ENCODE measurements at regions of chr22 and their contacts with region 1.

Region 1: DNA sequence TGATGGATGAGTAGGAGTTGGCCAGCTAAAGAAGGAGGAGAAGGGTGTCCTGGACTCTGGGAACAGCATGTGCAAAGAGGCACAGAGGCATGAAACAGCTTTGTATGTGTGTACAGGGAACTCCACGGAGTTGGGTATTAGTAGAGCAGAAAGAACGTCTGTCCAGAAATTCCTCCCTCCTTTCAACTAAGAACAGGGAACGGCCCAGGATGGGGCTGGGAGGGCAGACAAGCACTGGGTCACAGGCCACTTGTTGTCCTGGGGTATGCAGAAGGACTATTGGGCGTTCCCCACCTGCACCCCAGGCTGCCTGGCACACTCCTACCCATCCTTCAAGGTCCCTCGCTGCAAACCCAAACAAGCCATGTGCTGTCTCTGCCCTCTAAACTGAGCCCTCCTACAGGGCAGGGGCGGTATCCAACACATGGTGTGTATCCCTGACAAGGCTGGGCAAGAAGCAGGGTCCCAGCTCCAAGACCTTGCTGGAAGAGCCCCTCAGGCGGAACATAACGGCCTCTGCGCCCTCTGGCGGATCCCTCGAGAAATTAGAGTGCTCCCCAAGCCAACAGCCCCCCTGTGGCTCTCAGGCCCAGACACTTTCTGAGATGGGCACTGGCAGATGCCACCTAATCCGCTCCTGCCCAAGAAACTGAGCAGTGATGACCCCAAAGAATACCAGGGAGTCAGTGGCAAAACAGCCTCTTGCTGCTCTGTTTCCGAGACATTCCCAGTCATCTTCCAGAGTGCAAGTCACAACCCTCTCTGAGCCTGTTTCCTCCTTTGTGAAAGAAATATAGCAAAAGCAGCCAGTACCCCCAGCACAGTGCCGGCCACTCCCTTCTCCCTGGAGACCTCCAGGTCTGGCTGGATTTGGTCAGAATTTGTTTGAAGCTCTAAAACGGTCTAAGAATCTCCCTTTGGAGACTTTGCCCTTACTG is 1.6 kb upstream of the ELFN2 start:
- DNase-seq: peak; percentile 59 to 78 (median 70)
- H3K4me3 ChIP-seq: no peak overlapping the region
- H3K27ac ChIP-seq: no peak overlapping the region
- H3K4me1 ChIP-seq: peaks cover 0 to 24% (median 14%) of the 10 kb centered on the region in 4 experiments
- H3K27me3 ChIP-seq: peaks cover 3 to 50% (median 20%) of the 10 kb centered on the region in 5 experiments

Region 2: DNA sequence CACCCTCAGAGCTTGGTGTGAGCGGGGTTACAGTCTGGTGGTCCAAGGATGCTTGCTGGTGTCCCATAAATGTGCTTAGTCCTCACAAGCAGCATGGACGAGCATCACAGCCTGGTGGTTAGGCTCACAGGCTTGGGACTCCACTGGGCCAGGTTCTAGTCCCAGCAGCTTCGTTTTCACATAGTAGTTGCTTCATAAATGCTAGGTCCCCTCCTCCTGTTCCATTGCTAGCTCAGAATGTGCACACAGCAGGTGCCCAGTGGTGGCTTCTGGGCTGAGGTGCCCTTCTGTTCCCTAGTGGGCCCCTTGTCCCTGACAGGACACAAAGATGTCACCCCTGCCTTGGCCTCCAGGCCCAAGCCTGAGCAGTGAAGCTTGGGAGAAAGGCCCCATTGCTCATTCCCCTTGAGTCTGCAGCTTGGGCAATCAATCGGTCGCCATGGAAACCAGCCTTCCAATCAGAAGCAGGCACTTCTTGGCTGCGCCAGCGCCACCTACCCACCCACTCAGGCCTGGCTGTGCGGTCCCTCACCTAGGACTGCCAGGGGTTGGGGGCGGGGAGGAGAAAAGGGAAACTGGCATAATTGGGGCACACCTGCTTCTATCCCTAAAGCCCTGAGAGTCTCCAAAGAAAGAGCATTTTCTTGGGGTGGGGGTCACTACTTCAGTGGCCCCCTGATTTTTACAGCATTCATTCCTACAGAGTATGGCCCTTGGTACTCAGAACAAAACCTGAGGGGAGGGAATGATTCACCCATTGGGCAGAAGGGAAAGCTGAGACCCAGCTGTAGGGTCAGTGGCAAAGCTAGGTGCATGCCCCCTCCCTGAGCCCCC is 98.5 kb before region 1 on chr22:
- CTCF ChIA-PET with region 1: interaction called, 10 read pairs
- POLR2A ChIA-PET with region 1: no interaction called
- DNase-seq: peak; percentile 69 to 80 (median 77)
- H3K4me3 ChIP-seq: no peak overlapping the region
- H3K27ac ChIP-seq: no peak overlapping the region
- H3K4me1 ChIP-seq: peaks cover 0 to 9% (median 5%) of the 10 kb centered on the region in 4 experiments
- H3K27me3 ChIP-seq: peaks cover 6 to 75% (median 38%) of the 10 kb centered on the region in 5 experiments

Region 3: GRCh38 chr22:37412495-37413250 is 16.2 kb before region 1 on chr22:
- CTCF ChIA-PET with region 1: interaction called, 13 read pairs
- POLR2A ChIA-PET with region 1: interaction called, 3 read pairs
- DNase-seq: peak in 2 of 3 donors; percentile 27 to 33
- H3K4me3 ChIP-seq: no peak overlapping the region
- H3K27ac ChIP-seq: no peak overlapping the region
- H3K4me1 ChIP-seq: peaks cover 0 to 30% (median 21%) of the 10 kb centered on the region in 4 experiments
- H3K27me3 ChIP-seq: peaks cover 0 to 7% (median 3%) of the 10 kb centered on the region in 5 experiments

Region 4: GRCh38 chr22:37442537-37442936 is 13.6 kb after region 1 on chr22:
- CTCF ChIA-PET with region 1: interaction called, 10 read pairs
- POLR2A ChIA-PET with region 1: no interaction called
- DNase-seq: peak in 1 of 3 donors; percentile 39
- H3K4me3 ChIP-seq: no peak overlapping the region
- H3K27ac ChIP-seq: no peak overlapping the region
- H3K4me1 ChIP-seq: no peaks in the 10 kb centered on the region
- H3K27me3 ChIP-seq: peaks cover 0 to 6% (median 0%) of the 10 kb centered on the region in 5 experiments

Region 5: DNA sequence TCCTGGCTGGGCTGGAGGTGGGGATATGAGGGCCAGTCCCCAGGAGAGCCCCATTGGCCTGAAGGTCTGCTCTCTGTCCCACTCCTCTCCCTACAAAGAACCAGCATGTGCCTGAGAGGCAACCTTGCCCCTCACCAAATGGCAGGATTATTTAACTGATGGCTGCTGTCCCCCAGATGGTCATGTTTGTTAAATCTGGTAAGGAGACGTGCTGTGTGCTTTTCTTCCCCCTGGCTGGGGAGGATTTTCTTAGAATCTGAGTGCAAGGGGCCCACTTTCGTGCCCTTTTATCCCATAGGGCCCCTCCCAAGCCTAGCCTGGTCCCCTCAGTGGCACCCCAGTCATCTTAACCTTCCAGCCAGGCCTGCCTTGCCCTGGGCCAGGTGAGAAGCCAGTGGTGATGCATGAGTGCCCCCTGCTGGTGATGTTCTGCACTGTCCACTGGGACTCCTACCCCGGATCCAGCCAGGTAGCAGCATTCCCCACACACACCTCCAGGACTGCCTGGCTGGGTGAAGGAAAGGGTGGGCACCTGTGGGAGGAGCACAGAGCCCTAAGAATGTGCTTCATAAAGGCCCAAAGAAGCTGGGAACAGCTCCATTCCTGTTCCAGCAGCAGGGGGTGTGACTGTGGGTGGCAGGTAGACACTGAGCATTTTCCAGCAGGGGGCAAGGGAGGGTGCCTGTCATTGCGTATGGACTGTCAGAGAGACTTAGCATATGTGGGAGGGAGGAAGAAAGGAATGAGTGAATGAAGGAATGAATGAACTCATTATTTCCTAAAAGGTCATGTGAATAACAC is 28.4 kb after region 1 on chr22:
- CTCF ChIA-PET with region 1: interaction called, 12 read pairs
- POLR2A ChIA-PET with region 1: no interaction called
- DNase-seq: peak; percentile 59 to 77 (median 71)
- H3K4me3 ChIP-seq: no peak overlapping the region
- H3K27ac ChIP-seq: no peak overlapping the region
- H3K4me1 ChIP-seq: peaks cover 0 to 6% (median 3%) of the 10 kb centered on the region in 4 experiments
- H3K27me3 ChIP-seq: no peaks in the 10 kb centered on the region

Region 6: GRCh38 chr22:37538590-37539357 is 109.9 kb after region 1 on chr22:
- CTCF ChIA-PET with region 1: no interaction called
- POLR2A ChIA-PET with region 1: no interaction called
- DNase-seq: peak; percentile 91 to 97 (median 96)
- H3K4me3 ChIP-seq: peak overlapping the region in 1 of 7 experiments; percentile 38
- H3K27ac ChIP-seq: no peak overlapping the region
- H3K4me1 ChIP-seq: peaks cover 4 to 40% (median 28%) of the 10 kb centered on the region in 4 experiments
- H3K27me3 ChIP-seq: peaks cover 0 to 16% (median 6%) of the 10 kb centered on the region in 5 experiments

Measured in common myeloid progenitor, CD34-positive (primary cell).